Ascending aorta (tissue), 2 donors: ENCODE measurements at regions of chr2 and their contacts with region 1.

Region 1: GRCh38 chr2:109173311-109174171 is 44.5 kb downstream of the SH3RF3 start:
- DNase-seq: peak; percentile 75 to 97
- H3K4me3 ChIP-seq: peak overlapping the region; percentile 6 to 31
- H3K27ac ChIP-seq: peak overlapping the region; percentile 95 to 98
- H3K4me1 ChIP-seq: peaks cover 27 to 70% of the 10 kb centered on the region in 2 donors
- H3K27me3 ChIP-seq: no peaks in the 10 kb centered on the region
- CTCF ChIP-seq: no peak

Region 2: GRCh38 chr2:108968619-108969018 is 204.9 kb before region 1 on chr2:
- intact Hi-C with region 1: no loop called
- DNase-seq: no peak
- H3K4me3 ChIP-seq: no peak overlapping the region
- H3K27ac ChIP-seq: no peak overlapping the region
- H3K4me1 ChIP-seq: no peaks in the 10 kb centered on the region
- H3K27me3 ChIP-seq: no peaks in the 10 kb centered on the region
- CTCF ChIP-seq: no peak

Region 3: GRCh38 chr2:109184368-109184767 is 10.8 kb after region 1 on chr2:
- intact Hi-C with region 1: loop called (anchors 1 kb)
- DNase-seq: no peak
- H3K4me3 ChIP-seq: no peak overlapping the region
- H3K27ac ChIP-seq: peak overlapping the region; percentile 74 to 76
- H3K4me1 ChIP-seq: peaks cover 12 to 40% of the 10 kb centered on the region in 2 donors
- H3K27me3 ChIP-seq: no peaks in the 10 kb centered on the region
- CTCF ChIP-seq: no peak